ENCODE measurements at regions of chr2 and their contacts with region 1.

Region 1: DNA sequence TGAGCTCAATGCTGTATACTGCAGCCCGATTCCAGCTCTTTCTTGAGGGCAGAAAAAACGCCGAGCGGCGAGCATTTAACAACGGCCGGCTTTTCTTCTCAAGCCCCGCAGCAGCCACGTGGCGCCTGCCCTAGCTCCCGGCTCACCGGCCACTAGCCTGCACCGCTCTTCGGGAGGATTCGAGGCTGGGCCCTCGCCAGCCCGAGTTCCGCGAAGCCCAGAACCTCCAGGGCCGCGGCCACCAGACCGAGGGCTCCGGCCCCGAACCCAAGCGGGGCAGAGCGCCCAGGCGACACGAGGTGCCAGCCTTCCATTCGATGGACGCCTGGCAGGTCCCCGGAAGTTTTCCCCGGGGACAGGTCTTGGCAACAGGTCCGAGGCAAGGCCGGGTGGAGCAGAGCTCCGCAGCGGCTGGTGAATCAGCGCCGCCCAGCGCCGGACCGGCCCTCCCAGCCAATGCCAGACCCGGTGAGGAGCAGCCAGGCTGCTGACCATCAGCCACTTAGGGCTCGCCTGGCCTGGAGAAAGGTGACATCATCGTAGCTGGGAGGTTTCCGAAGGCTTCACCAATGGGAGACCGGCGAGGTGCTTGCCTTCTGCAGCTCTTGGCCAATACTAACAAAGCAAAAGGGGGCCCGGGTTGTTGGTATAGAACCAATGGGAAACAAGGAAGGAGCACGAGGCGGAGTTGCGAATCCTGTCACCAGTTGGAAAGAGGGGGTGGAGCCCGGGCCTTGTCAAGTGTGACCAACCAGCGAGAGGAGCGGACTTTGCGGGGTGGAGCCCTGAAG is 544 bp upstream of the MXD1 start:
- DNase-seq: peak in 2 of 3 donors; percentile 97 to 100
- ATAC-seq: peak; percentile 89
- H3K4me3 ChIP-seq: peak overlapping the region; percentile 79
- H3K4me1 ChIP-seq: peaks cover 5% of the 10 kb centered on the region
- CTCF ChIP-seq: peak; percentile 18

Region 2: GRCh38 chr2:70070541-70071268 is 156.3 kb after region 1 on chr2:
- intact Hi-C with region 1: loop called (anchors 5 to 10 kb)
- DNase-seq: peak in 2 of 3 donors; percentile 50 to 81
- ATAC-seq: peak; percentile 83
- H3K4me3 ChIP-seq: no peak overlapping the region
- H3K4me1 ChIP-seq: peaks cover 26% of the 10 kb centered on the region
- CTCF ChIP-seq: peak; percentile 69

Region 3: DNA sequence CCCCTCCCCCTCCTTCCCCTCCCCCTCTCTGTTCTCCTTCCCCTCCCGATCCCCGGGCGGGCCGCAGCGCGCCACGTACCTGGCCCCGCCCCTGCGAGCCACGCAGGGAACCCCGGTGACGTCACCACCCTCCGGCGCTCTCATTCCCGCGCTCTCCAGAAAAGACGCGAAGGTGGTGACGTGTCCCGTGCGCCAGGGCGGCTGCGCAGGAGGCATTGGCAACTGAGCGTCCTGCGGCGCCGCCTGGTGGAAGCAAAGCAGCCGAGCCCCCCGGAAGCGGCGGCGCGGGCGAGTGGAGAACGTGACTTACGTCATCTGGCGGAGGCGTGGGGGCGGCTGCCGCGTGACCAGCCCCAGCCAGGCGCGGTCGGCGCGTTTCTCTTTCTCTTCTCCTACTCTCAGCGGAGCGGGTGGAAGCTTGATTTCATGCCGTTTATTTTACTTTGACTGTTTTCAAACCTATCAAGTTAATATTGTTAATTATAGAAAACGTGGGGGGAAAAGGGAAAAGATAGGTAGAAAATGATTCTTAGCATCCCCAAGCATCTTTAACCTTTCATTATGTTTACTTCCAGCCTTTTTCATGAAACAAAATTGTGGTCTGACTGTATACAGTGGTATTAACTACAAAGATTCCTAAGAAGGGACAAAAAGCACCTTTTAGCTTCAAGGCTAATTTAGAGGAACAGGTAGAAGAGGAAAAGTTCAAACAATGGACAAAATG is 228.4 kb after region 1 on chr2:
- intact Hi-C with region 1: loop called (anchors 5 to 10 kb)
- DNase-seq: peak; percentile 99 to 100 (median 100)
- ATAC-seq: peak; percentile 84
- H3K4me3 ChIP-seq: peak overlapping the region; percentile 23
- H3K4me1 ChIP-seq: peaks cover 9% of the 10 kb centered on the region
- CTCF ChIP-seq: peak; percentile 89